Endothelial cell of umbilical vein (primary cell): ENCODE measurements at regions of chr5 and their contacts with region 1.

Region 1: GRCh38 chr5:149485655-149486425 is 65.4 kb downstream of the CSNK1A1 start:
- DNase-seq: peak; percentile 98
- H3K4me3 ChIP-seq: no peak overlapping the region
- H3K27ac ChIP-seq: peak overlapping the region; percentile 75
- H3K4me1 ChIP-seq: peaks cover 22% of the 10 kb centered on the region
- H3K27me3 ChIP-seq: no peaks in the 10 kb centered on the region
- CTCF ChIP-seq: no peak
- POLR2A ChIP-seq: peak; percentile 1

Region 2: GRCh38 chr5:149406203-149406978 is 79.4 kb before region 1 on chr5:
- CTCF ChIA-PET with region 1: no interaction called
- POLR2A ChIA-PET with region 1: no interaction called
- dilution Hi-C with region 1: no loop called
- intact Hi-C with region 1: no loop called
- DNase-seq: no peak
- H3K4me3 ChIP-seq: no peak overlapping the region
- H3K27ac ChIP-seq: no peak overlapping the region
- H3K4me1 ChIP-seq: no peaks in the 10 kb centered on the region
- H3K27me3 ChIP-seq: peaks cover 0 to 1% of the 10 kb centered on the region in 2 experiments
- CTCF ChIP-seq: no peak
- POLR2A ChIP-seq: no peak

Region 3: GRCh38 chr5:149448831-149449714 is 36.8 kb before region 1 on chr5:
- CTCF ChIA-PET with region 1: interaction called, 17 read pairs
- POLR2A ChIA-PET with region 1: interaction called, 5 read pairs
- dilution Hi-C with region 1: no loop called
- intact Hi-C with region 1: loop called (anchors 1 kb)
- DNase-seq: peak; percentile 56
- H3K4me3 ChIP-seq: no peak overlapping the region
- H3K27ac ChIP-seq: peak overlapping the region; percentile 90
- H3K4me1 ChIP-seq: peaks cover 63% of the 10 kb centered on the region
- H3K27me3 ChIP-seq: no peaks in the 10 kb centered on the region
- CTCF ChIP-seq: peak; percentile 22 to 23
- POLR2A ChIP-seq: no peak

Region 4: DNA sequence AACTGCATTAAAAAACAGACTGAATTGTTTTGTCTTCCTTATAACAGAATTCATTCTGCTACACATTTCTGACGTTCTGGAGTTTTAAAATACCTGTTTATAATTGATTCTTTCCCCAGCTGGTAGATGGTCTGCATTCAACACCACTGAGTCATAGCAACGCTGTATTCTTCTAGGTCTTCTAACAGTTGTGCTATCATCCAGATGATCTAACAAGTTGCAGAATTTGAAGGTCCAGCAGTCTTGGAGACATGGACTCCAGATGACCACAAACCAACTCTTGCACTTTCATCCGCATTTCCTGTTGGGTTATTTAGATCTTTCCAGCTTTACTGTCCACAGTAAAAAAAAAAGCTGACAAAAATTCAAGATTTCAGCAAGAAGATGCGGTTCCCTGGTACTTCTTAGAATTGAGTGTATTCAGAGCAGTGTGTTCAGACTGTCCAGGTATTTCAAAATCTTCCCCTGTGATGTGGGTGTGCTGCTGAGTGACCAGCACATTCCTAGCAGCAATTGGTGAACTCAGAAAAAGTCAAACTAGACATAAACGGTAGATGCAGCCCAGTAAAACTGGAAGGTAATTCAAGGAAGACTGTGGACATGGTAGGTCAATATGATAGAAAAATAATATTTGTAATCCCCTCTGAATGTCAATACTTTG is 15.2 kb after region 1 on chr5:
- CTCF ChIA-PET with region 1: no interaction called
- POLR2A ChIA-PET with region 1: no interaction called
- dilution Hi-C with region 1: no loop called
- intact Hi-C with region 1: no loop called
- DNase-seq: no peak
- H3K4me3 ChIP-seq: no peak overlapping the region
- H3K27ac ChIP-seq: no peak overlapping the region
- H3K4me1 ChIP-seq: no peaks in the 10 kb centered on the region
- H3K27me3 ChIP-seq: no peaks in the 10 kb centered on the region
- CTCF ChIP-seq: no peak
- POLR2A ChIP-seq: no peak